Activated CD4-positive, alpha-beta memory T cell treated with anti-CD3 and anti-CD28 coated beads, Interleukin-2, amount 10 ng/mL, durations not matched to agents 7 days and 5 days (primary cell): ENCODE measurements at regions of chr4 and their contacts with region 1.

Region 1: GRCh38 chr4:121696581-121697461 is at the start of gene ANXA5:
- DNase-seq: peak; percentile 87
- H3K4me3 Mint-ChIP-seq: peak within 1 kb of the TSS; percentile 99
- H3K27ac Mint-ChIP-seq: peak within 1 kb of the TSS; percentile 99
- H3K4me1 Mint-ChIP-seq: peaks cover 38% of the 10 kb centered on the region
- H3K27me3 Mint-ChIP-seq: peaks cover 31% of the 10 kb centered on the region
- total RNA-seq, gene ANXA5: 234 to 235 TPM

Region 2: DNA sequence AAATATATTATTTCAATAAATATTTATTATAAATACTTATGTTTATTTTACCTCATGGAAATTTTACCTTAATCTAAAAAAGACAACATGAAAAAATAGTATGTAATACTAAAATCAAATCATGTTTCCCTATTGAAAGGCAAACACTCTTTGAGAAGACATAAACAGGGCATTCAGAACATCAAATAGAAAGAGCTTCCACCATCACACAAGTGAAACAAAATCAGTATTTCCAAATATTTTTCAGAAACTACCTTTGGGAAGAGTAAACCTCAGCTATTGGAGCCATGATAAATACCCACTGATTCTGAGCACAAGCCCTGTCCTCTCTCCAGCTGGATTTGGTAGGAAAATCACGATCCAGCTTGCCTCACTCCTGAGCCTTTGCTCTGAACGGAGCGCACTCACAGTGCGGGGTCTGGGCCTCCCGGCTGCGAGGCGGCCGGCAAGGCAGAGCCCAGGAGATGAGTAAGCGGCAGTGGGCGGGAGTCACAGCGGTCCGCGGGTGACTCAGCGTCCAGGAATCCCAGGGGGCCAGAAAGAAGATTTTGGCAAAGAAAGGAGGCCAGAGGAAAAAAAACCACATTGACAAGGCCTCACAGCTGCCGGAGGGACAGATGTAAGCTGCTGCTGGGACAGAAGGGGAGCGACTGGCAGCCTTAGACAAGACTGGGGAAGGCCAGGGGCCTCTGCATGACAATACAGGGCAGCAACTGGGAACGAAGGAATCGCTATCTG is 14.6 kb after region 1 on chr4:
- CTCF ChIA-PET with region 1: interaction called, 6 read pairs
- POLR2A ChIA-PET with region 1: interaction called, 77 read pairs
- DNase-seq: no peak
- H3K4me3 Mint-ChIP-seq: no peak overlapping the region
- H3K27ac Mint-ChIP-seq: no peak overlapping the region
- H3K4me1 Mint-ChIP-seq: peaks cover 41% of the 10 kb centered on the region
- H3K27me3 Mint-ChIP-seq: peaks cover 46% of the 10 kb centered on the region

Region 3: DNA sequence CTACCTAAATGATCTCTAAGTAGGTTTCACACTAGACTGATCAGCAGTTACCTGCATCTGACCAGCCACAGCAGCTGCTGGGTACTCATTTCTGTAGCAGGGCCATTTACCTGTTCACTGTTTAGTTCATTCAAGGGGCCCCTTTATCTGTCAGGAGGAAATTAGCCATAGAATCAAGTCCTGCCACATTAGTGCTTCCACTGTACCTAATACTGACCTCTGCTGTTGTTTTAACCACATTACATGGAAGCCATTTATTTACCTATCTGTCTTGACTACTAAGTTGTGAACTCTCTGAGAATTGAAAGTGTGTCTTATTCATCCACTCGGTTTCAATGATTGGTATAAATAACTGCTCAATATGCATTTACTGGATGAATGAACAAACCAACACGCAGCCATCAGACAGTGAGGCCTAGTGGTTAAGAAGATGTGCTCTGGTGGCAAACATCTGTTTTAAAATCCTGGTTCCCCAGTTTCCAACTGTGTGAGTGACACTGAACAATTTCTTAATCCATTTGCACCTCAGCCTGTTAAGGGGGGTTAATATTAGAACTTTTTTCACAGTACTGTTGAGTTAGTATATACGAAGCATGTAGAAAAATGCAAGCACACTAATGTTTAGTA is 29.9 kb after region 1 on chr4:
- CTCF ChIA-PET with region 1: interaction called, 11 read pairs
- POLR2A ChIA-PET with region 1: interaction called, 17 read pairs
- DNase-seq: peak; percentile 19
- H3K4me3 Mint-ChIP-seq: no peak overlapping the region
- H3K27ac Mint-ChIP-seq: no peak overlapping the region
- H3K4me1 Mint-ChIP-seq: peaks cover 5% of the 10 kb centered on the region
- H3K27me3 Mint-ChIP-seq: peaks cover 2% of the 10 kb centered on the region

Region 4: DNA sequence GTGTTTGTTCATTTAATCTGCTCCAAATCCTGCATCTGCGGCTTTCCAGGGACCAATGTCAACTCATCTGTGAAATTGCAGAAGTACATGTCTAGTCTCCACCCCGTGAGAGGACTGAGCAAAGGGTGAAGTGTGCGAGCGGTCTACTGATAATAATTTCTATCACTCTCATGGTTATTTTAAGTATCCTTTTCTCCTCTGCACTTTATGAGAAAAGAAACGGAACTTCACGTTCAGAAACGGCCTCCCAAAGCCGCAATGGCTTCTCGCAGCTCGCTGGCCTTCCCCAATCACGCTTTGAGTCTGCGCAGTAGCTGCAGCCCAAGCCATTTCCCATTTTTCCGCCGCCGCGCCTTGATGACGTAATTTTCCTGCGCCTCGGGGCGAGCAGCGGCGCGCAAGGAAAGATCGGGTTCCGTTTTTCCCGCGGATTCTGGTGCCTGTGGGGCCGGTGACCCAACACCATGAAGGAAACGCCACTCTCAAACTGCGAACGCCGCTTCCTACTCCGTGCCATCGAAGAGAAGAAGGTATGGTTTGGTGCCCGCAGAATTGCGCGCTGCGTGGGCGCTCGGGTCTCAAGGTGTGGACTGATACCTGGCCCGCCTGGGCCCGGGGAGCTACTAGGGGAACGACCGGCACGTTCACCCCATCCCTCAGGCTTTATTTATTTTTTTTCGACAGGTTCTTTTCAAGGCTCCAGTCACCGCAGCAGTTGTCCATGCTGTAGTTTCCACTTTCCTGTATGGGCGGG is 104.3 kb after region 1 on chr4 and contains the start of gene EXOSC9:
- CTCF ChIA-PET with region 1: interaction called, 3 read pairs
- POLR2A ChIA-PET with region 1: interaction called, 23 read pairs
- DNase-seq: peak; percentile 92
- H3K4me3 Mint-ChIP-seq: peak within 1 kb of the TSS; percentile 84
- H3K27ac Mint-ChIP-seq: peak within 1 kb of the TSS; percentile 95
- H3K4me1 Mint-ChIP-seq: peaks cover 50% of the 10 kb centered on the region
- H3K27me3 Mint-ChIP-seq: no peaks in the 10 kb centered on the region
- total RNA-seq, gene EXOSC9: 50.5 to 51.0 TPM

Region 5: DNA sequence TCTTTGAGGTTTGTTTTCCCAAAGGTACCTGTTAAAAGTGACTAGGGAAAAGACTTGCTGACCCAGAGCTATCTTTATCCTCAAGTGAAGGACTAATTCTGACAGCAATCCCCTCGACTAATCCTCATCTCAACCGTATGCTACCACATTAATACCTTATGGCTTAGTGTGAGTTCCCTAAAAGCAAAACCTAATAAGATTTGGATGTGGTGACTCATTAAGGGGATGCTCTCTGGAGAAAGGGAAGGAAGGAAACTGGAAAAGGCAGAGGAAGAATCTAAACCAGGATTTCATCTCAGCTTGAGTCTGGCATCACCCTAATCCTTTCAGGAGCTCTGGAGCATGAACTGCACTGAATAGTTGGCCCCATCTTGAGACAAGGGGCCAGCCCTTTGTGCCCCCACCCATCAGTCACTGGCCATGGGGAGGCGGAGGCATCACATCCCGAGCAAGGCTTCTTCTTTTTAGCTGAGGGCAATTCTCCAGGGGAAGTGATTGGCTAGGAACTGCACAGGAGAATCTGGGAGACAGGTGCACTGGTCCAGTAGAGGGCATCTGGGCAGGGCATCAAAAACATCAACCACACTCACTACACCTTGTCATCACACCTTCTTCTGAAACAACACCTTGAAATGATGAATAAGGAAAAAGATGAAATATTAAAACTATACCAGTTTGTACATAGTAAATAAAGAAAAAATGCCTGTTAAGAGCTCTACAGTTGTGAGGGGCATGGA is 180.4 kb after region 1 on chr4:
- CTCF ChIA-PET with region 1: no interaction called
- POLR2A ChIA-PET with region 1: no interaction called
- DNase-seq: no peak
- H3K4me3 Mint-ChIP-seq: no peak overlapping the region
- H3K27ac Mint-ChIP-seq: no peak overlapping the region
- H3K4me1 Mint-ChIP-seq: no peaks in the 10 kb centered on the region
- H3K27me3 Mint-ChIP-seq: peaks cover 35% of the 10 kb centered on the region